Heart left ventricle (tissue), 16 donors: ENCODE measurements at regions of chr3 and their contacts with region 1.

Region 1: DNA sequence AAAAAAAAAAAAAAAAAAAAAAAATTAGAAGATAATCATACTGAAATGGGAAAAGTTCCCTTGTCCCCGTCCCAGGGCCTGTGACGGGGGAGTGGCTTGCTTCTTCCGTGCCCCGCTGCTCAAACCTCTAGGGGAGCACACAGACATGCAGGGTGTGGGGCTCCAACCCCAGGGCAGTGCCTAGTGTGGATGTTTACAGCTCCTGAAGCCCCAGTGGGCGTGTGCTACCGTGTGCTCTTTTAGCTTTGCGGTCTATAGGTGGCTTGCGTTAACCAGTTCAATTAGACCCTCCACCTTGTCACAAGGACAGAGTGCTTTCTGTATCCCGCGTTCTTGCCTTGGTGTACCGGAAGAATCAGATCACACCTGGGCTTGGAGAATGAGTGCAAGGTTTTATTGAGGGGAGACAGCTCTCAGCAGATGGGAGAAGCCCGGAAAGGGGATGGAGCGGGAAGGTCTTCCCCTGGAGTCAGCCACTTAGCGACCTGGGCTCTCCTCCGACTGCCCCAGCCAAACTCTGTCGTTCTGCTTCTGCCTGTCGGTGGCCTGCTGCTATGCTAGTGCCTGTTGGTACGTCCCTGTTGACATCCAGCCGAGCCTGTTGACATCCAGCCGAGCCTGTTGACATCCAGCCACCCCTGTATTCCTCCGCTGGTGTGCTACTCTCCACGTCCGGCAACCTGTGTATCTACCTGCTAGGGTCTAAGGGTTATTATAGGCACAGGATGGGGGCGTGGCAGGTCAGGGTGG is 569.8 kb downstream of the VGLL3 start:
- DNase-seq: no peak
- ATAC-seq: no peak
- H3K4me3 ChIP-seq: no peak overlapping the region
- H3K27ac ChIP-seq: no peak overlapping the region
- H3K4me1 ChIP-seq: no peaks in the 10 kb centered on the region
- H3K27me3 ChIP-seq: no peaks in the 10 kb centered on the region
- CTCF ChIP-seq: no peak
- POLR2A ChIP-seq: no peak

Region 2: DNA sequence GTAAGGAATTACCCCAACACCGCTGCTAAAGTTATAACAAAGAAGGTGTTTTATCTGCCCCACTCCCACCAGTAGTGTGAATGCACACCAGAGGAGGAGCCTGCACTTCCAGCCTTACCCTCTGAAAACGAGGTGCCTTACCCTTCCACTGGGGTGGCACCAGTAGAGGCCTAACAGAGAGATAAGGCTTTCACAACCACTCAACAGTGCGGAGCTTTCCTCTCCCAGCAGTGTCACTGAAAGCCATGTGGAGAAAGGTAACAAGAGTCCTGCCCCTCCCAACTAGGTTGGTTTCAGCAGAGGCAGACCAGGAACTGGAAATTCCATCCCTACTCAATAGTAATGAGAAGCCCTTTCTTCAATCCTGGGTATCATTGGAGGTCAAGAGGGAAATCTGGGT is 30.6 kb after region 1 on chr3:
- intact Hi-C with region 1: loop called in 1 of 10 experiments (anchors 2 kb)
- DNase-seq: no peak
- ATAC-seq: no peak
- H3K4me3 ChIP-seq: no peak overlapping the region
- H3K27ac ChIP-seq: no peak overlapping the region
- H3K4me1 ChIP-seq: no peaks in the 10 kb centered on the region
- H3K27me3 ChIP-seq: no peaks in the 10 kb centered on the region
- CTCF ChIP-seq: no peak
- POLR2A ChIP-seq: no peak

Region 3: DNA sequence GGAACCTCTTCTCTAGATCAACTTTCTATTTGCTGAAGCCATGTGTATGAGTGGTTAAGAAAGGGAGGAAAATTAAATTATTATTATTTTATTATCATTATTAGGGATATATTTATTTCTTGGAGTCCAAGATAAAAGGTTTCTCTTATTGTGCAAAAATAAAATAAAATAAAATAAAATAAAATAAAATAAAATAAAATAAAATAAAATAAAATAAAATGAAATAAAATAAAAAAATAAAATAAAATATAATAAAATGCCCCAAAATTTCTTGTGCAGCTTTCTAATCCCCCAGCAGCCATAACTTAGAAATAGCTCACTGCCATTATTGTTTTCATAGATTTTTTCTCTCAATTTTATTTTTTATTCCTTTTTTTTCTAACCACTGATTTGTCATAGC is 43.0 kb after region 1 on chr3:
- intact Hi-C with region 1: no loop called
- DNase-seq: no peak
- ATAC-seq: no peak
- H3K4me3 ChIP-seq: no peak overlapping the region
- H3K27ac ChIP-seq: no peak overlapping the region
- H3K4me1 ChIP-seq: no peaks in the 10 kb centered on the region
- H3K27me3 ChIP-seq: no peaks in the 10 kb centered on the region
- CTCF ChIP-seq: no peak
- POLR2A ChIP-seq: no peak

Region 4: GRCh38 chr3:87324609-87325008 is 903.4 kb after region 1 on chr3:
- intact Hi-C with region 1: no loop called
- DNase-seq: no peak
- ATAC-seq: no peak
- H3K4me3 ChIP-seq: no peak overlapping the region
- H3K27ac ChIP-seq: no peak overlapping the region
- H3K4me1 ChIP-seq: no peaks in the 10 kb centered on the region
- H3K27me3 ChIP-seq: no peaks in the 10 kb centered on the region
- CTCF ChIP-seq: no peak
- POLR2A ChIP-seq: no peak